HepG2 (cell line): ENCODE measurements at regions of chr19 and their contacts with region 1.

Region 1: GRCh38 chr19:37931881-37932655 is 25.1 kb downstream of the SIPA1L3 start:
- DNase-seq: peak; percentile 84
- ATAC-seq: peak; percentile 85
- H3K4me3 ChIP-seq: peak overlapping the region; percentile 57 to 75 (median 68); a peak in 5 of 6 replicates
- H3K27ac ChIP-seq: peak overlapping the region; percentile 87
- H3K4me1 ChIP-seq: peaks cover 69% of the 10 kb centered on the region
- H3K27me3 ChIP-seq: no peaks in the 10 kb centered on the region
- CTCF ChIP-seq: peak; percentile 27; the same call in 1 of the 2 replicates
- EP300 ChIP-seq: 0 out of 4 replicates have a peak, but pooled peaks of 1 of the 2 experiments have one; percentile 46
- POLR2A ChIP-seq: peak; percentile 47 to 79; a peak in 3 of 4 replicates
- RAD21 ChIP-seq: no peak

Region 2: DNA sequence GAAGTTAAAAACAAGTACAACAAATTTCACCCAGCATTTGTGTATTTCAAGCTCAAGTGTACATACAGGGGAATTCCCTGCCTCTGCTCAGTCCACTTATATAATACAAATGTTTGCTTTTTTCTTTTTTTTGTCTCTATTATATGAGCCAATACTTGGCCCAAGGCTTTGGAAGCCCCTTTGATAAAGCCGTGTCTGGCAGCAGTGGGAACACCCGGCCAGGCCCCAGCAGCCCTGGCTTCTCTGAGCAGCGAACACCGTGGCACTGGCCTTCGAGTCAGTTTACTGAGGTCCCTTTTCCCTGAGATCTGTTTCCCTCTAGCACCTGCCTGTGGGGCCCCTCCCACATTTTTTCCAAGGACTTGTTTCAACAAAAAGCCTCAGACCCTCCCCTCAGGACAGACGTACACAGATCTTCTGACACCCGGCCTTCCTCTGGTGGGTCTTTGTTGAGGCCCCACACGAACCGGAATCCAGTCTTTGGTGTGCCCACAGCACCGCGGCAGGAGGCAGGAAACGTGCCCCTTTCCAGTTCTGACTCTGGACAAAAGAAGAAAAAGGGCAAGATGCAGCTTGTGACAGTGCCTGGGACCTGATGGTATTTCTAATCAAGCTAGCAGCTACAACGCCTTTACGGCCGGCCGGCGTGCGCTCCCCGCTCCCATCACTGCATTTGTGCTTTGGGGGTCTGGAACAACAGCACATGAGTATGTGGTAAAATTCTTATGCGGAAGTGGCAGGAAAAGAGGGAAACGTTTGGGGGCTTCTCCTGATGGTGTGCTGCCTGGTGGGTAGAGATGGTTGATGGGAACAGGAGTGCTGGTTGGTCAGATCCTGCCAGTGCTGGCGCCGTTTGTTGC is 11.2 kb before region 1 on chr19:
- CTCF ChIA-PET with region 1: no interaction called
- POLR2A ChIA-PET with region 1: interaction called, 35 read pairs
- in situ Hi-C with region 1: no loop called
- intact Hi-C with region 1: no loop called
- DNase-seq: peak; percentile 49
- ATAC-seq: peak; percentile 79
- H3K4me3 ChIP-seq: no peak overlapping the region; a peak in 1 of 6 replicates
- H3K27ac ChIP-seq: no peak overlapping the region
- H3K4me1 ChIP-seq: peaks cover 20% of the 10 kb centered on the region
- H3K27me3 ChIP-seq: no peaks in the 10 kb centered on the region; a peak in 1 of 5 replicates
- CTCF ChIP-seq: no peak
- EP300 ChIP-seq: no peak
- POLR2A ChIP-seq: no peak
- RAD21 ChIP-seq: no peak